Activated T-helper 2 cell treated with anti-CD3 and anti-CD28 coated beads, Interferon-gamma antibody, Interleukin-2, Interleukin-4, amounts not matched to agents 10 μg/mL and 5 μg/mL and 100 μg/mL, durations not matched to agents 14 hours and 24 hours and 36 hours (primary cell): ENCODE measurements at regions of chr2 and their contacts with region 1.

Region 1: DNA sequence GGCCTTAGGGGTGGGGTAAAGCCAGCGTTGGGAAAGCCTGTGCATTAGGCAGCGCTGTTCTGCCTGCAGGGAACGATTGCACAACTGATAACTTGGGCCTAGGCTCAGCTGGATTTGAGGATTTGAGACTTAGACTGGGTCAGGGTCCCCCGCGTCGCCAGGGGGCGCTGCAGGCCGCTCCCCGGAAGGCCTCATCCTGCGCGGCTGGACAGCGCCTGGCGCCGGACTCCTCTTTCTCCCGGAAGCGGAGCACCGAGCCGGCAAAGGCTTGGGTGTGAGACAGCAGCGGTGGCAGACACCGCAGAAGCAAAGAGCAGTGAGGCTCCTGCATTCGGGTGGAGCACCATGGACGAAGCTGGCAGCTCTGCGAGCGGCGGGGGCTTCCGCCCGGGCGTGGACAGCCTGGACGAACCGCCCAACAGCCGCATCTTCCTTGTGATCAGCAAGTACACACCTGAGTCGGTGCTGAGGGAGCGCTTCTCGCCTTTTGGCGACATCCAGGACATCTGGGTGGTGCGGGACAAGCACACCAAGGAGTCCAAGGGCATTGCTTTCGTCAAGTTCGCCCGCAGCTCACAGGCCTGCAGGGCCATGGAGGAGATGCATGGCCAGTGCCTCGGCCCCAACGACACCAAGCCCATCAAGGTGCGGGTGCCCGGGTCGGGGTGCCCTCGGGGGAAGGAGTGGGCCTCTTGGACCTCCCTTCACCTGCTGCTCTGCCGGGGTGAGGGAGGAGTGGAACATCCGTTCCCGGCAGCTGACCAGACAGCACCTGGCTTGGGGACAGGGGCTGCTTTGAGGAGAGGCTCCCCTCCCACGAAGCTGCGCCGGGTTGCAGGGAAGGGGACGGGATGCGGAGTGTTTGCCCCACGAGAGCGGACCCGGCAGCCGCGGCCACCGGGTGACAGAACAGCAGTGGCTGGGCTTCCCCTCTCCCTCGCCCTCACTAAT is at the start of gene RBM45:
- DNase-seq: peak; percentile 81
- H3K4me3 Mint-ChIP-seq: peak within 1 kb of the TSS; percentile 87
- H3K27ac Mint-ChIP-seq: peak within 1 kb of the TSS; percentile 65
- H3K4me1 Mint-ChIP-seq: peaks cover 30% of the 10 kb centered on the region
- H3K27me3 Mint-ChIP-seq: no peaks in the 10 kb centered on the region
- total RNA-seq, gene RBM45: 14.3 and 19.8 TPM in 2 replicates

Region 2: GRCh38 chr2:178193823-178194599 is 81.5 kb after region 1 on chr2 and contains the start of gene OSBPL6:
- intact Hi-C with region 1: loop called (anchors 2 kb)
- DNase-seq: peak; percentile 69
- H3K4me3 Mint-ChIP-seq: peak within 1 kb of the TSS; percentile 71
- H3K27ac Mint-ChIP-seq: no peak within 1 kb of the TSS
- H3K4me1 Mint-ChIP-seq: peaks cover 15% of the 10 kb centered on the region
- H3K27me3 Mint-ChIP-seq: peaks cover 59% of the 10 kb centered on the region
- total RNA-seq, gene OSBPL6: 1.8 and 2.3 TPM in 2 replicates

Region 3: DNA sequence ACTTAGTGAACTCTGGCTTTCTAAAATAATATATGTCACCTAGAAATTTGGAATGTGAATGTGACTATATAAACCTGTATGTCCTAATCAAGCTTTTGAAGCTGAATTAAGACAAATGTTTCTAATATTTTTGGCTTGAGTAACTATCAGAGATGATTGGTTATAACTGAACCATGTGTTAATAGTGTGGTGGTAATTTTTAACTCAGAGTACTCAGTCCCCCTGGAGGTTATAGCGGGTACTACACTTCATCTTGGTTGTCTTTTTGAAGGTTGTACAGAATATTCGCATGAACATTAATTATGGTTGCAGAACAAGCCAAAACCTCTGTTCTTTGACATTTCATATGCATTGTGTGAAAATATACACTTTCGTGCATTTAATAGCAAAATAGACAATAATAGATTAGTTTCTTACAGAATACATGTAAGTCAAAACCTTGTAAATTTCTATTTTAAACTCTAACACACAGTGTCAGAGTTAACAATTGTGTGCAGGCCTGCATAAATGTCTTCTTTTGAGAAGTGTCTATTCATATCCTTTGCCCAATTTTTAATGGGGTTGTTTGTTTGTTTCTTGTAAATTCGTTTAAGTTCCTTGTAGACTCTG is 167.9 kb after region 1 on chr2:
- intact Hi-C with region 1: loop called (anchors 1 kb)
- DNase-seq: no peak
- H3K4me3 Mint-ChIP-seq: no peak overlapping the region
- H3K27ac Mint-ChIP-seq: no peak overlapping the region
- H3K4me1 Mint-ChIP-seq: peaks cover 6% of the 10 kb centered on the region
- H3K27me3 Mint-ChIP-seq: peaks cover 19% of the 10 kb centered on the region

Region 4: DNA sequence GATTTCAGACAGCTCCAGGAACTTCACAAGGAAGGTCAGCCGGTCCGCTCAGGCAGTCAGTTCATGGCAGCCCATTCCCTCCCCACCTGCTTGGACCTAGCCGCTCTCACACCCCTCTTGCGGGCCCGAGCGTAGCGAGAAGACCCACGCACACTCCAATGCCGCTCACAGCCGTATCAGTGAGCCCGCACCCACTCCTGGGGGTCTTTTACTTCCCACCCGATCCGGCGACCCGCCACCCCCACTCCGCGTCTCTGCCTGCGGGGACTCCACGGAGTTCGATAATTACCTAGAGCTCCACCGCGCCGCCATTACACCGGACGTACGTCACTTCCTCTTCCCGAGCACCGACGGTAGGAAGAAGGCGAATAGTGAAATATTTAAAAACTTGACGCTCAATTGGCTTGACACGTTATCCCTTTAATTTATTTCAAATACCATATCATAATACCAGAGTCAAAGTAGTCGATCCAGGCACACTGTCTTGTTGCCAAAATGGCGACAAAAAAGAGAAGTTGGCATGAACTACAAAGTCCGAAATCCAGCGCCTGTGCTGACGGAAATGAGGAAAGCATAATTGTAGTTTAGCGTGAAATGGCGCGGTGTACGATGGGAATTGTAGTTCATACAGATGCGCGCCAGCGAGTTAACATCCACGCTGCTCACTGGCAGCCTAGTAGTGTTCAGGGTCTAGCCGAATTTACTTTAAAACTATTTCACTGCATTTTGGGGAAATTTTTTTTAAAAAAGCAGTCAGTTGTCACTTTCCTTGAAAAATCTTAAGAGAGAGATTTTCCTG is 1894.5 kb after region 1 on chr2 and contains the start of gene CWC22:
- intact Hi-C with region 1: loop called (anchors 5 kb)
- DNase-seq: peak; percentile 81
- H3K4me3 Mint-ChIP-seq: peak within 1 kb of the TSS; percentile 98
- H3K27ac Mint-ChIP-seq: peak within 1 kb of the TSS; percentile 94
- H3K4me1 Mint-ChIP-seq: peaks cover 18% of the 10 kb centered on the region
- H3K27me3 Mint-ChIP-seq: no peaks in the 10 kb centered on the region
- total RNA-seq, gene CWC22: 27.6 and 27.8 TPM in 2 replicates